ENCODE measurements at regions of chr5 and their contacts with region 1.

Region 1: GRCh38 chr5:172770675-172771438 is at the start of gene DUSP1:
- DNase-seq: peak; percentile 96
- ATAC-seq: peak; percentile 53
- H3K4me3 Mint-ChIP-seq: peak within 1 kb of the TSS; percentile 92
- H3K27ac Mint-ChIP-seq: peak within 1 kb of the TSS; percentile 99
- H3K4me1 Mint-ChIP-seq: peaks cover 73% of the 10 kb centered on the region
- H3K27me3 Mint-ChIP-seq: no peaks in the 10 kb centered on the region
- CTCF ChIP-seq: no peak
- total RNA-seq, gene DUSP1: 15.0 and 21.2 TPM in 2 replicates

Region 2: GRCh38 chr5:172188033-172188892 is 582.6 kb before region 1 on chr5 and contains the start of gene STK10:
- CTCF ChIA-PET with region 1: no interaction called
- POLR2A ChIA-PET with region 1: interaction called, 3 read pairs
- intact Hi-C with region 1: loop called (anchors 5 kb)
- DNase-seq: peak; percentile 88
- ATAC-seq: peak; percentile 75
- H3K4me3 Mint-ChIP-seq: peak within 1 kb of the TSS; percentile 100
- H3K27ac Mint-ChIP-seq: peak within 1 kb of the TSS; percentile 97
- H3K4me1 Mint-ChIP-seq: peaks cover 44% of the 10 kb centered on the region
- H3K27me3 Mint-ChIP-seq: no peaks in the 10 kb centered on the region
- CTCF ChIP-seq: peak; percentile 37
- total RNA-seq, gene STK10: 233 and 276 TPM in 2 replicates

Region 3: GRCh38 chr5:172788771-172789686 is 18.2 kb after region 1 on chr5:
- CTCF ChIA-PET with region 1: interaction called, 3 read pairs
- POLR2A ChIA-PET with region 1: interaction called, 17 read pairs
- intact Hi-C with region 1: no loop called
- DNase-seq: no peak
- ATAC-seq: peak; percentile 18
- H3K4me3 Mint-ChIP-seq: no peak overlapping the region
- H3K27ac Mint-ChIP-seq: no peak overlapping the region
- H3K4me1 Mint-ChIP-seq: peaks cover 14% of the 10 kb centered on the region
- H3K27me3 Mint-ChIP-seq: no peaks in the 10 kb centered on the region
- CTCF ChIP-seq: no peak

Region 4: DNA sequence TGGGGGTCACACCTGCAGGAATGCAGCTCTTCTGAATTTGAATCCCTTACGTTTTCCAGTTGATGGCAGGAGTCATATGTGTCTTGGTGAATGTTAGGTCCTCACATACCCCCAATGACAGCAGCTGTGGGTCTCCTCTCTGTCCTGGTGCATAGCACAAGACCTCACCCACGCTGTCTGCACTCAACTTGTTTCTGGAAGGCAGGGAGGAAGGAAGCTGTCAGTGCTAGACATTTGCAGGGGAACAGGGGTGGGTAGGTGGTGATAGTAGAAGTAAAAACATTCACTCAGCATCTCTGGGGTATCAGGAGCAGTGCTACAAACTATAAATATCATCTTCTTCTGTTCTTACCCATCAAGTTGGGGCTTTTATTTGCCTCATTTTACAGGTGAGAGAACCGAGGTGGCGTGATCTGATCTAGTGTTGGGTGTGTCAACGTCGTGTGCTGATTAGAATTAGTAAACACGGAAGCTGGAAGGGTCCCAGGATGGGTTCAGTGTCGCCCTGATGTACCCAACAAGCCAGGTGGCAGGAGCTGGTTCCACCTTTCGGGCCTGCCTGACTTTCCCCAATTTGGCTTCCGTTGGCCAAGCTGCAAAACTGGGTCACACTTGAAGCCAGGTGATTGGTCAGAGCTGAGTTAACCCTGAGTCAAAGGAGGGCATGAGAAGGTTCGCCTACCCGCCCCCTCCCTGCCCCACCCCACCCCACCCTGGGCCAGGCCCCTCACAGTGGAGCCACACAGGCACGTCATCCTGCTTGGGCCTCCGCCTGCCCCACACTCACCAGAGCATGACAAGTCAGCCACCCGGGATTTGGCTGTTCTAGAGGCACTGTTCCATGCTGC is 79.0 kb after region 1 on chr5:
- CTCF ChIA-PET with region 1: interaction called, 15 read pairs
- POLR2A ChIA-PET with region 1: interaction called, 91 read pairs
- intact Hi-C with region 1: loop called (anchors 1 kb)
- DNase-seq: peak; percentile 58
- ATAC-seq: peak; percentile 89
- H3K4me3 Mint-ChIP-seq: peak overlapping the region; percentile 64
- H3K27ac Mint-ChIP-seq: peak overlapping the region; percentile 88
- H3K4me1 Mint-ChIP-seq: peaks cover 76% of the 10 kb centered on the region
- H3K27me3 Mint-ChIP-seq: no peaks in the 10 kb centered on the region
- CTCF ChIP-seq: no peak

Region 5: DNA sequence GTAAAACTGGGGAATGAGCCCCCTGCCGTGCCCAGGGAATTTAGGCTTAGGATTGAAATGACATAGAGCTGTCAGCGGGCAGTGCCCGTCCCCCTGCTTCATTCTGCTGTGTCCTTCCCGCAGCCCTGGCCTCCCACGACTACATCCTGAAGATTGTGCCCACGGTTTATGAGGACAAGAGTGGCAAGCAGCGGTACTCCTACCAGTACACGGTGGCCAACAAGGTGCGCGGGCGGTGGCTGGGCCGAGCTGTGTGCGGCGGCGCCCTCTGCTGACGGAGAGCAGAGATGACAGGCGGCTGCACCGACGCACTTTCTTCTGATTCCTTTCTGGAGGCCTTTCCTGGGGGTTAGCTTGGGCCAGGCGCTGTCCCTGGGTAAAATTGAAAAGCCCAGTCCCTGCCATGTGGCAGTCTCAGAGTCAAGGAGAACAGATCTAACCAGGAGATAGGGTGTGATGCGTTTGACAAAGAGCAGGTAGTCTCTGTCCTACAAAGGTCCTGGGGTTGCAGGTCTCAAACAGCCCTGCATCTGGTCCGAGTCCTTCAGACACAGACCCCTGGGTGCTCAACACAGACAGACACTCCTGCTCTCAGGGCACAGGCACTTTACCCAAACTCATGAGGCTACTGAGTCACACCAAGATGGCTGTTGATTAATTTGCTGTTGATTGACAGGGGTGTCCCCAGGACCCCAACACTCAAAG is 161.6 kb after region 1 on chr5:
- CTCF ChIA-PET with region 1: interaction called, 20 read pairs
- POLR2A ChIA-PET with region 1: interaction called, 31 read pairs
- intact Hi-C with region 1: loop called (anchors 1 kb)
- DNase-seq: peak; percentile 58
- ATAC-seq: peak; percentile 92
- H3K4me3 Mint-ChIP-seq: no peak overlapping the region
- H3K27ac Mint-ChIP-seq: no peak overlapping the region
- H3K4me1 Mint-ChIP-seq: peaks cover 17% of the 10 kb centered on the region
- H3K27me3 Mint-ChIP-seq: no peaks in the 10 kb centered on the region
- CTCF ChIP-seq: peak; percentile 81

Region 6: GRCh38 chr5:173144200-173145176 is 373.6 kb after region 1 on chr5 and contains the start of gene BNIP1:
- CTCF ChIA-PET with region 1: no interaction called
- POLR2A ChIA-PET with region 1: no interaction called
- intact Hi-C with region 1: loop called (anchors 1 kb)
- DNase-seq: peak; percentile 97
- ATAC-seq: peak; percentile 90
- H3K4me3 Mint-ChIP-seq: peak within 1 kb of the TSS; percentile 99
- H3K27ac Mint-ChIP-seq: peak within 1 kb of the TSS; percentile 97
- H3K4me1 Mint-ChIP-seq: peaks cover 12% of the 10 kb centered on the region
- H3K27me3 Mint-ChIP-seq: no peaks in the 10 kb centered on the region
- CTCF ChIP-seq: peak; percentile 54
- total RNA-seq, gene BNIP1: 17.9 and 20.2 TPM in 2 replicates

Measured in activated B cell treated with CpG ODN at 0.5 μM for 24 hours (primary cell).